G401 (cell line): ENCODE measurements at regions of chr7 and their contacts with region 1.

Region 1: GRCh38 chr7:104548868-104549267 is 220.5 kb downstream of the LHFPL3 start:
- DNase-seq: no peak

Region 2: DNA sequence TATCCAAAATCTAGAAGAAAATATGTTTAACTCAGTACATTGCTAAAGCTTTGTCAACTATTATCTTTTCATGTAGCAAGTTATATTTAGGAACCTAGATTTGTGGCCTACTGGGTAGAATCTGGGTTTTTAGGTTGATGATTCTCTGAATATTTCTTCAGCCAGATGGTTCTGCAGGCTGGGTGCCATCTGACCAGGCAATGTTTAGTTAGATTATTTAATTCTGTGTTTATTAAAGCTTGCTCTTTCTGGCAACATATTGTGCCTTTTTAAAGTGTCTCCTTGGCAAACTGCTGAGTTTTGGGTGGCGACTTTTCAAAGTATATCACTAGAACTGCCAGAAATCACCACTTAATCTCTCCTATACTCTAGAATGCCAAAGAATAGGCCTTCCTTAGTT is 106.4 kb before region 1 on chr7:
- in situ Hi-C with region 1: loop called (anchors 25 kb)
- DNase-seq: peak; percentile 94